Head of caudate nucleus (tissue), 42 donors: ENCODE measurements at regions of chr18 and their contacts with region 1.

Region 1: GRCh38 chr18:11851146-11851805 is at the start of gene CHMP1B:
- DNase-seq: peak; percentile 96 to 100 (median 98)

Region 2: GRCh38 chr18:11752116-11752911 is 99.0 kb before region 1 on chr18:
- intact Hi-C with region 1: loop called (anchors 10 kb)
- DNase-seq: no peak

Region 3: GRCh38 chr18:11908182-11909060 is 57.1 kb after region 1 on chr18 and contains the start of gene MPPE1:
- intact Hi-C with region 1: loop called (anchors 5 kb)
- DNase-seq: peak; percentile 67 to 96 (median 90)